Heart right ventricle (tissue), 16 donors: ENCODE measurements at regions of chr10 and their contacts with region 1.

Region 1: GRCh38 chr10:120942806-120943413 is 91.7 kb downstream of the WDR11 start:
- DNase-seq: peak; percentile 73 to 81
- ATAC-seq: peak; percentile 85 to 94 (median 90)
- H3K4me3 ChIP-seq: peak overlapping the region in 1 of 10 donors; percentile 12
- H3K27ac ChIP-seq: no peak overlapping the region
- H3K4me1 ChIP-seq: peaks cover 0 to 8% (median 0%) of the 10 kb centered on the region in 9 donors
- H3K27me3 ChIP-seq: peaks cover 0 to 27% (median 16%) of the 10 kb centered on the region in 7 donors
- CTCF ChIP-seq: peak; percentile 60 to 91 (median 89)

Region 2: GRCh38 chr10:121608469-121609190 is 665.7 kb after region 1 on chr10:
- intact Hi-C with region 1: loop called in 7 of 10 experiments (anchors 5 to 10 kb)
- DNase-seq: peak in 1 of 2 donors; percentile 49
- ATAC-seq: peak; percentile 70 to 91 (median 78)
- H3K4me3 ChIP-seq: peak overlapping the region in 9 of 10 donors; percentile 19 to 43 (median 31)
- H3K27ac ChIP-seq: no peak overlapping the region
- H3K4me1 ChIP-seq: peaks cover 0 to 6% (median 5%) of the 10 kb centered on the region in 9 donors
- H3K27me3 ChIP-seq: peaks cover 0 to 68% (median 44%) of the 10 kb centered on the region in 7 donors
- CTCF ChIP-seq: peak; percentile 75 to 90 (median 88)

Region 3: DNA sequence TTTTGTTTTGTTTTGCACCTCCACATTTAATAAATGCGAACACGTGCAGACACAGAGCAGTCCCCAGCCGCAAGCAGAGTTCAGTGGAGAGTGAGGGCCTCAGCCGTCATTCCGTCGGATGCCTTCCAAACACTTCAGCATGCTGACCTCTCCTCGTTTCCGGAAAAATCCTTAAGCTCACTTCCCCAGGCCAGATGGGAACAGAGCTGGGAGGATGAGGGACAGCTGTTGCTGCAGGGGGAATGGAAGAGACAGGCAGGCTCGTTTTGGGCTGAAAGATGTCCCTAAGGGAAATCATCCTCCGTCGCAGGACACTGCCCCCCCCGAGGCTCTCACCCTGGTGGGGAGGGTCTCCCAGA is 672.5 kb after region 1 on chr10:
- intact Hi-C with region 1: loop called in 1 of 10 experiments (anchors 10 kb)
- DNase-seq: peak in 1 of 2 donors; percentile 53
- ATAC-seq: peak in 7 of 8 donors; percentile 58 to 91 (median 80)
- H3K4me3 ChIP-seq: no peak overlapping the region
- H3K27ac ChIP-seq: peak overlapping the region in 3 of 10 donors; percentile 1 to 25 (median 14)
- H3K4me1 ChIP-seq: peaks cover 0 to 4% (median 0%) of the 10 kb centered on the region in 9 donors
- H3K27me3 ChIP-seq: peaks cover 0 to 15% (median 11%) of the 10 kb centered on the region in 7 donors
- CTCF ChIP-seq: no peak

Region 4: GRCh38 chr10:121734589-121735045 is 791.7 kb after region 1 on chr10:
- intact Hi-C with region 1: loop called (anchors 2 to 10 kb)
- DNase-seq: no peak
- ATAC-seq: peak in 3 of 8 donors; percentile 11 to 25 (median 19)
- H3K4me3 ChIP-seq: peak overlapping the region in 2 of 10 donors; percentile 17 to 26
- H3K27ac ChIP-seq: no peak overlapping the region
- H3K4me1 ChIP-seq: peaks cover 0 to 19% (median 8%) of the 10 kb centered on the region in 9 donors
- H3K27me3 ChIP-seq: peaks cover 0 to 47% (median 19%) of the 10 kb centered on the region in 7 donors
- CTCF ChIP-seq: peak; percentile 54 to 81 (median 71)

Region 5: GRCh38 chr10:121900443-121901174 is 957.7 kb after region 1 on chr10:
- intact Hi-C with region 1: loop called in 6 of 10 experiments (anchors 5 kb)
- DNase-seq: peak in 1 of 2 donors; percentile 21
- ATAC-seq: peak in 7 of 8 donors; percentile 63 to 81 (median 70)
- H3K4me3 ChIP-seq: no peak overlapping the region
- H3K27ac ChIP-seq: no peak overlapping the region
- H3K4me1 ChIP-seq: peaks cover 0 to 6% (median 0%) of the 10 kb centered on the region in 9 donors
- H3K27me3 ChIP-seq: no peaks in the 10 kb centered on the region
- CTCF ChIP-seq: peak; percentile 28 to 81 (median 75)